Calu3 (cell line): ENCODE measurements at regions of chr18 and their contacts with region 1.

Region 1: DNA sequence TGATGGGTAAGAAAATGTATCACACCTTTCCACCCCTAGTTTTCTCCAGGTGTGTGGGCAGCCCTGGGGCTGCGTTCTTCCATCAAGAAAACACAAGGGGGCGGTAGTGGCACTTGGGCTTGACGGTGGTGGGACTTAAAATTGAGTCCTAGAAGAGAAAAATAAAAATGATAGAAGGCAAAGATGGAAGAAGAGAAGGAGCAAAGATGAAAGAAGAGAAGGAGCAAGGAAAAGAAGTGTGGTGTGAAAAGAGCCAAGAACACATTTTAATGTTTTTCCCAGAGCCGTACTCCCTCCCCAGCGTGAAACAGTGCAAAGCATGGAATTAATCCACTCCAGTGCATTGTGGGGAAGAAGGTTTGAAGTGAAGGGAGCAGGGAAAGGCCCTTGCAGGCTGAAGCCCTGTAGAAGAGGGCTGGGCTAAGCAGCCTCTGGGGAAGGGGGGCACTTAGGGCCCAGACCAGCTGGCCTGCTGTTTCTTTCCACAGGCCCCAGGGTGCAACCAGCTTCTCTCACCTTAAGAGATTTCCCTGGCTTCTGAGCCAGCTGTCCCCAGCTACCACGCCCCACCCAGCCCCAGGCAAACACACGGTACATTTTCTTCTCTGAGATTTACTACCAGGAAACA is 256.8 kb downstream of the RNF152 start:
- DNase-seq: peak; percentile 68
- H3K4me3 Mint-ChIP-seq: no peak overlapping the region
- H3K27ac Mint-ChIP-seq: no peak overlapping the region
- H3K4me1 Mint-ChIP-seq: peaks cover 9% of the 10 kb centered on the region
- H3K27me3 Mint-ChIP-seq: no peaks in the 10 kb centered on the region
- CTCF ChIP-seq: peak; percentile 82

Region 2: DNA sequence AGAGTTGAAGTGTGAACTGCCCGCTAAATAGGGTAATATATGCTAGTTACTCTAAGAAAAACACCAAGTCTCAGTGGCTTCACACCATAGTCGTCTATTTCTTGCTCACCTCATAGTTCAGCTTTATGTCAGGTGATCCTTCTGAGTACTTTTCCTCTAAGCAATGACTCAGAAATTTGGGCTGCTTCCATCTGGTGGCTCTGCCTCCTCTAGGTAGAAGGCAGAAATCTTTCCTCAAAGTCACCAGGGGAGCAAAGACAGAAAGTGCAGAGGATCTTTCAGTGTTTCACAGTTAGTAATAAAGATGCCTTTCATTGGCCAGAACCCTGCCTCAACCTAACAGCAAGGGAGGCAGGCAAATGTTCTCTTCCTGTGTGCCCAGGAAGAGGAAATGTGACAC is 285.4 kb before region 1 on chr18:
- CTCF ChIA-PET with region 1: no interaction called
- intact Hi-C with region 1: no loop called
- DNase-seq: no peak
- H3K4me3 Mint-ChIP-seq: no peak overlapping the region
- H3K27ac Mint-ChIP-seq: no peak overlapping the region
- H3K4me1 Mint-ChIP-seq: no peaks in the 10 kb centered on the region
- H3K27me3 Mint-ChIP-seq: no peaks in the 10 kb centered on the region
- CTCF ChIP-seq: no peak

Region 3: GRCh38 chr18:61738488-61738887 is 102.5 kb after region 1 on chr18:
- CTCF ChIA-PET with region 1: no interaction called
- intact Hi-C with region 1: loop called (anchors 5 kb)
- DNase-seq: no peak
- H3K4me3 Mint-ChIP-seq: no peak overlapping the region
- H3K27ac Mint-ChIP-seq: no peak overlapping the region
- H3K4me1 Mint-ChIP-seq: peaks cover 21% of the 10 kb centered on the region
- H3K27me3 Mint-ChIP-seq: no peaks in the 10 kb centered on the region
- CTCF ChIP-seq: no peak

Region 4: DNA sequence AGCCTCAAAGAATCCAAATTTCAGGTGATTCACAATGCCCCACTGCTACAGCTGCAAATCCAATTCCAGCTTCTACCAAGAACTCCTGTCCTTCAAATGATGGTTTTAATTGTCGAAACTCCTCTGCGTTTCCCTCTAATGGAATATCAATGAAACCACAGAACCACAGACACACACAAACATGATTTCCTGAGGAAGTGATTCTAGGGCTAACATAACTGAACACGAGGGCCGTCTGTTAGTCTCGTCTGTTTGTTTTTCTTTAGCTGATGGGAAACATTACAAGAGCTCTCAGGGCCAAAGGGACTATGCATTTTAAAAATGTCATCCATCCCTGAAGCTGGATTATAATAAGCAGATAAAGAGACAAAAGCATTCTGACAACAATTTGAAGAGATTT is 197.4 kb after region 1 on chr18:
- CTCF ChIA-PET with region 1: no interaction called
- intact Hi-C with region 1: no loop called
- DNase-seq: no peak
- H3K4me3 Mint-ChIP-seq: no peak overlapping the region
- H3K27ac Mint-ChIP-seq: no peak overlapping the region
- H3K4me1 Mint-ChIP-seq: no peaks in the 10 kb centered on the region
- H3K27me3 Mint-ChIP-seq: peaks cover 34% of the 10 kb centered on the region
- CTCF ChIP-seq: no peak

Region 5: DNA sequence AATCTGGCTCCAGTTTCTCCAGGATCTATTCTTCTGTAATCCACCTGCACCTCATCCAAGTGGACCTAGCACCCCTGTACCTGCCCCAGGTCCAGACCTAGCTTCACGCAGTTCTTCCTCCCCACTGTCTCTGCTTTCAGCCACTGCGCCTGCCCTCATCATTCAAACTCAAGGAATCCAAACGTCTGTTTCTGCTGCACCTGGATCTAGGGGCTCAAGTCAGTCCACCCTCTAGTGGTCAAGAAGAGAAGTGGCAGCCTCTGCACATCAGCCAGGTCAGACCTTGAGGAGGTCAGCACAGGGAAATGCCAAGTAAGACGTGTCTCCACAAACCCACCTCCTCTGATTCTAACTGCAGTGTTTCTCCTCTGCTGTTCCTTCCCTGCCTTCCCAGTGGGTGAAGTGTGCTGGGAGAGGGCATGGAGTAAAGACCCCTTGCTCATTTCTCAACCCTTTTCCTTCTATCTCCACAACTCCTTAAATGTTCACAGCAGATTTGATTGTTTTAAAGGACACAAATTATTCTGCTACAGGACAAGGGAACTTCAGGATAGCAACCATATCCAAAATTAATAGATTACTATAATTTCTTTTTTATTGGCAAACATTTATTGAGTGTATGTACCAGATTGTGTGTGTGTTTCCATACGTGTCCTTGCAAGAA is 265.4 kb after region 1 on chr18:
- CTCF ChIA-PET with region 1: no interaction called
- intact Hi-C with region 1: loop called (anchors 1 kb)
- DNase-seq: peak; percentile 44
- H3K4me3 Mint-ChIP-seq: no peak overlapping the region
- H3K27ac Mint-ChIP-seq: no peak overlapping the region
- H3K4me1 Mint-ChIP-seq: peaks cover 25% of the 10 kb centered on the region
- H3K27me3 Mint-ChIP-seq: no peaks in the 10 kb centered on the region
- CTCF ChIP-seq: peak; percentile 89